MCF 10A (cell line): ENCODE measurements at regions of chr14 and their contacts with region 1.

Region 1: DNA sequence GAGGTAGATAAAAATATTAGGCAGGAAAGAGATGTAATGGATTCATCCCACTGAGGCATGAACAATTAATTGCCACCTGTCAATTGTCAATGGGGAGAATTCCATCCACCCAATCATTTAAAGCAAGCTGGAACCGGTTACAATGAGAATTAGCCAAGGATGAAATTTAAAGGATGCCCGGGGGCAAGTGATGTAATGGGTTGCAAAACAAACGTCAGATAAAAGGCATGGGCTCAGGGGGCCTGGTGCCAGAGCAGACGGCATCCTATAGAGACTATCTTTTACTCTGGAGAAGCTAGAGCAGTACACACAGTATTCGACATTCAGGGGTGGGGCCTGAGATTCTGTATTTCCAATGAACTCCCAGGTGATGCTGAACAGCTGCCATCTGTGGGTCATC is 80.5 kb upstream of the ZFP36L1 start:
- DNase-seq: peak; percentile 66
- H3K4me3 Mint-ChIP-seq: no peak overlapping the region
- H3K27ac Mint-ChIP-seq: no peak overlapping the region
- H3K4me1 Mint-ChIP-seq: peaks cover 14% of the 10 kb centered on the region
- H3K27me3 Mint-ChIP-seq: no peaks in the 10 kb centered on the region
- CTCF ChIP-seq: no peak

Region 2: GRCh38 chr14:68862954-68863594 is 10.3 kb before region 1 on chr14:
- CTCF ChIA-PET with region 1: interaction called, 12 read pairs
- POLR2A ChIA-PET with region 1: interaction called, 3 read pairs
- intact Hi-C with region 1: no loop called
- DNase-seq: peak; percentile 85
- H3K4me3 Mint-ChIP-seq: no peak overlapping the region
- H3K27ac Mint-ChIP-seq: no peak overlapping the region
- H3K4me1 Mint-ChIP-seq: no peaks in the 10 kb centered on the region
- H3K27me3 Mint-ChIP-seq: no peaks in the 10 kb centered on the region
- CTCF ChIP-seq: peak; percentile 71